ENCODE measurements at regions of chr1 and their contacts with region 1.

Region 1: DNA sequence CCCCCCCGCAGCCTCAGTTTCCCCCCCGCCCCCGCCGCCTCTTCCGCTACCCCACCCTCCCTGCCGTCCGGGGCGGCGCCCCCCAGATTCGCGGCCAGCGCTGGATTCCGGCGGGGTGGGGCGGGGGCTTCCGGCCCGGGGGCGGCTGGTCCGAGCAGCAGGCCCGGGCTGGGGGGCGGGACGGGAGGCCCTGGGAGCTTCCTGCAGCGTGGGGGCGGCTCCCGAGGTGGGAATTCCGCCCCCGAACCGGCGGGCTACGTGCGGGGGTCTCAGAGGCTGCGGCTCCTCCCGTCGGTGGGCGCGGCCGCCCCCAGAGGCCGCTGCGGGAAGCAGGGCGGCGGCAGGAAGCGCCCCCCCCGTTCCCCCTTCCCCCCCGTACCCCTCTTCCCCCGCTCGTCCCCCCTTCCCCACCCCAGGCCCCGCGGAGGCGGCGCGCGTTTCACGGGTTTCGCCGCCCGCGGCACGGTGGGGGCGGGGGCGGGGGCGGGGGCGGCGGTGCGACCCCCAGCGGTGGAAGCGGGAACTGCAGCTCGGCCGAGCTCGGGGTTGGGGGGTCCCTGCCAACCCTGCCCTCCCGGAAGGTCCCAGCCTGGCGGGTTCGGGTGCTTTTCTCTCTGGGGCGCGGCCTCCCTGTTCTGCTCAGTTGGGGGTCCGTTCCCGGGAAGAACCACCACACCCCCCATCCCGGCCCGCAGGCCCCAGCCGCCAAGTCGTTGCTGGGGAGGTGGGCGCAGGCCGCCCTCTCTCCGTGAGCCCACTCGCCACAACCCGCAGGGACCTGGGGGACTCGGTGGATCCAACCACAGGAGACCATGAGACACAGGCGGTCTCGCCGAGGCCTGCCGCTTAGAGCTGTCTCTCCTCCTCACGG is 76.3 kb downstream of the MORN1 start:
- DNase-seq: peak; percentile 74
- ATAC-seq: peak; percentile 9 to 61 (median 34)
- H3K4me3 ChIP-seq: peak overlapping the region; percentile 45 to 80 (median 68)
- H3K27ac ChIP-seq: peak overlapping the region; percentile 82 to 96 (median 91)
- H3K4me1 ChIP-seq: peaks cover 40 to 100% (median 68%) of the 10 kb centered on the region in 9 donors
- H3K27me3 ChIP-seq: peaks cover 0 to 20% (median 0%) of the 10 kb centered on the region in 7 donors
- CTCF ChIP-seq: peak; percentile 92 to 99 (median 97)

Region 2: DNA sequence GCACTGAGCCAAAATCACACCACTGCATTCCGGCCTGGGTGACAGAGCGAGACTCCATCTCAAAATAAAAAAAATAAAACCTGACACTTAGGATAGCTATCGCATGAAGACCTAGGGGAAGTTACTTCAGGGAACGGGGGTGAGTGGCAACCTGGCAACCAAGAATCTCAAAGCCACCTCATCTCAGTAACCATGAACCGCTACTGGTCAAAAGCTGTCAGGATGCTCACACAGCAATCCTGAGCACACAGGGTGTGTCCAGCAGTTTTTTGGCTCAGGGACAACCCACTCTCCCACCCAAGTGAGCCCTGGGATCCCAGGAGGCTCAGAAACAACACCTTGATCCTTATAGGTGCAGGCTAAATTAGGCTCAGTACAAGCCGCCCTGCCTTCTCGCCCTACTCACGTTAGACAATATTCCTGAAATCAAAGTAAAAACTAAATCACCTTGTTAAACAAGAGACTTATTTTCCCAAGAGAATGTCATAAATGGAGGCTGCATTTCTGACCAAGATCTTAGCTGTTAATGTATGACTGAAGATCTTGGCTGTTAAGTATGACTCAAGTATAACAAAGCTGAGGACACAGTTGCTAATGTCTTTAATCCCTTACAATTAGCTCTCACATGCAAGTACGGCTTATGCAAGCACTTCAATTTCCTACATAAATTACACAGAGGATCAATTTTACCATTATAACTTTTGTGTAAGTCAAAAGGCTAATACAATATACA is 488.5 kb before region 1 on chr1:
- intact Hi-C with region 1: no loop called
- DNase-seq: no peak
- ATAC-seq: peak in 1 of 8 donors; percentile 25
- H3K4me3 ChIP-seq: no peak overlapping the region
- H3K27ac ChIP-seq: peak overlapping the region in 1 of 10 donors; percentile 2
- H3K4me1 ChIP-seq: peaks cover 0 to 23% (median 14%) of the 10 kb centered on the region in 9 donors
- H3K27me3 ChIP-seq: no peaks in the 10 kb centered on the region
- CTCF ChIP-seq: no peak

Region 3: GRCh38 chr1:2108213-2108876 is 206.7 kb before region 1 on chr1:
- intact Hi-C with region 1: no loop called
- DNase-seq: peak in 1 of 2 donors; percentile 15
- ATAC-seq: peak in 6 of 8 donors; percentile 16 to 41 (median 28)
- H3K4me3 ChIP-seq: no peak overlapping the region
- H3K27ac ChIP-seq: no peak overlapping the region
- H3K4me1 ChIP-seq: peaks cover 0 to 6% (median 0%) of the 10 kb centered on the region in 9 donors
- H3K27me3 ChIP-seq: peaks cover 0 to 7% (median 0%) of the 10 kb centered on the region in 7 donors
- CTCF ChIP-seq: peak in 8 of 9 donors; percentile 13 to 50 (median 38)

Region 4: DNA sequence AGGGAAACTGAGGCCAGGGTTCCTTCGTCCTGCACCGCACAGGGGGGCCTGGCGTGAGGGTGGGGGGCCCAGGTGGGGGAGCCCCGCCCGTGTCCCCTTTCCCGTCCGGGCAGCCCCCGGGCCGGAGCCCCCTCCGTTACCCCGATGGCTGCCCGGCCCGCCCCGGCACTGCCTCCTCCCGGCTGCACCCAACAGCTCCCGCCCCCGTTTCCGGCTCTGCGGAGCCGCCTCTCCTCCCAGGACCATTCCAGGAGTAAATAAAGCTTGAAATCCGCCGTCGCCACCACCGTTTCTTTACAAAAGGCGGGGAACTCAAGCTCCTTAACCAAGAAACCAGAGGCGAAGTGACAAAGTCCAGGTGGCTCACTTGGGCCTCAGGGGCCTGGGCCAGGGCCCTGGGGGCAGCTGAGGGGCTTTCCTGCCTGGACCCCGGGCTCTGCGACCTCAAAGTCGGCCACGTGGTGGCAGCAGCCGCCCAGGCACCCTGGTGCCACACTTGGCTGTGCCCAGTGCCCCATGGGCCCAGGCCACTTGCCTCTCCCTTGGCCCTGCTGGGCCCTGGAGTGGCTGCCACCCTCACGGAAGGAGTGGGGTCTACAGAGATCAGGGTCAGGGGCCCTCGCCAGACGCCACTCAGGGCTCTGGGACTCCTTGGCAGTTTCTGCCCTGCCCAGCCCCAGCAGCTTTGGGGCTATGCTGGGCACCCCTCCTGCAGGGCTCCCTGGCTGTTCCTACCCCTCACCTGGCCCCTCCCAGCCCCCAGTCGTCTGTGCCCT is 120.0 kb before region 1 on chr1:
- intact Hi-C with region 1: loop called in 9 of 10 experiments (anchors 1 to 10 kb)
- DNase-seq: peak; percentile 92
- ATAC-seq: peak; percentile 77 to 86 (median 82)
- H3K4me3 ChIP-seq: peak overlapping the region; percentile 47 to 78 (median 70)
- H3K27ac ChIP-seq: peak overlapping the region; percentile 90 to 98 (median 94)
- H3K4me1 ChIP-seq: peaks cover 36 to 71% (median 65%) of the 10 kb centered on the region in 9 donors
- H3K27me3 ChIP-seq: no peaks in the 10 kb centered on the region
- CTCF ChIP-seq: peak; percentile 91 to 98 (median 95)

Region 5: GRCh38 chr1:2212542-2213491 is 102.2 kb before region 1 on chr1:
- intact Hi-C with region 1: loop called in 1 of 10 experiments (anchors 5 kb)
- DNase-seq: peak; percentile 93 to 97
- ATAC-seq: peak; percentile 42 to 81 (median 76)
- H3K4me3 ChIP-seq: peak overlapping the region; percentile 11 to 50 (median 43)
- H3K27ac ChIP-seq: peak overlapping the region; percentile 94 to 100 (median 98)
- H3K4me1 ChIP-seq: peaks cover 33 to 73% (median 55%) of the 10 kb centered on the region in 9 donors
- H3K27me3 ChIP-seq: no peaks in the 10 kb centered on the region
- CTCF ChIP-seq: peak in 8 of 9 donors; percentile 6 to 53 (median 45)